ENCODE measurements at regions of chr16 and their contacts with region 1.

Region 1: GRCh38 chr16:49921791-49922456 is 66.0 kb upstream of the ZNF423 start:
- DNase-seq: peak; percentile 1
- ATAC-seq: peak; percentile 90
- H3K4me3 ChIP-seq: no peak overlapping the region
- H3K27ac ChIP-seq: no peak overlapping the region
- H3K4me1 ChIP-seq: no peaks in the 10 kb centered on the region
- H3K27me3 ChIP-seq: no peaks in the 10 kb centered on the region
- CTCF ChIP-seq: peak; percentile 77

Region 2: GRCh38 chr16:49194537-49195236 is 727.2 kb before region 1 on chr16:
- CTCF ChIA-PET with region 1: no interaction called
- POLR2A ChIA-PET with region 1: no interaction called
- in situ Hi-C with region 1: no loop called
- intact Hi-C with region 1: no loop called
- DNase-seq: no peak
- ATAC-seq: no peak
- H3K4me3 ChIP-seq: no peak overlapping the region
- H3K27ac ChIP-seq: no peak overlapping the region
- H3K4me1 ChIP-seq: no peaks in the 10 kb centered on the region
- H3K27me3 ChIP-seq: no peaks in the 10 kb centered on the region
- CTCF ChIP-seq: no peak

Region 3: GRCh38 chr16:49407873-49408550 is 513.9 kb before region 1 on chr16:
- CTCF ChIA-PET with region 1: no interaction called
- POLR2A ChIA-PET with region 1: no interaction called
- in situ Hi-C with region 1: no loop called
- intact Hi-C with region 1: loop called (anchors 5 kb)
- DNase-seq: peak; percentile 32
- ATAC-seq: peak; percentile 100
- H3K4me3 ChIP-seq: no peak overlapping the region
- H3K27ac ChIP-seq: no peak overlapping the region
- H3K4me1 ChIP-seq: no peaks in the 10 kb centered on the region
- H3K27me3 ChIP-seq: no peaks in the 10 kb centered on the region
- CTCF ChIP-seq: peak; percentile 84

Region 4: GRCh38 chr16:49860593-49860992 is 61.3 kb before region 1 on chr16:
- CTCF ChIA-PET with region 1: interaction called, 6 read pairs
- POLR2A ChIA-PET with region 1: no interaction called
- in situ Hi-C with region 1: no loop called
- intact Hi-C with region 1: loop called (anchors 2 kb)
- DNase-seq: no peak
- ATAC-seq: no peak
- H3K4me3 ChIP-seq: no peak overlapping the region
- H3K27ac ChIP-seq: no peak overlapping the region
- H3K4me1 ChIP-seq: no peaks in the 10 kb centered on the region
- H3K27me3 ChIP-seq: no peaks in the 10 kb centered on the region; the same call in 1 of the 2 replicates
- CTCF ChIP-seq: no peak